Activated naive CD4-positive, alpha-beta T cell treated with anti-CD3 and anti-CD28 coated beads for 36 hours (primary cell): ENCODE measurements at regions of chr3 and their contacts with region 1.

Region 1: DNA sequence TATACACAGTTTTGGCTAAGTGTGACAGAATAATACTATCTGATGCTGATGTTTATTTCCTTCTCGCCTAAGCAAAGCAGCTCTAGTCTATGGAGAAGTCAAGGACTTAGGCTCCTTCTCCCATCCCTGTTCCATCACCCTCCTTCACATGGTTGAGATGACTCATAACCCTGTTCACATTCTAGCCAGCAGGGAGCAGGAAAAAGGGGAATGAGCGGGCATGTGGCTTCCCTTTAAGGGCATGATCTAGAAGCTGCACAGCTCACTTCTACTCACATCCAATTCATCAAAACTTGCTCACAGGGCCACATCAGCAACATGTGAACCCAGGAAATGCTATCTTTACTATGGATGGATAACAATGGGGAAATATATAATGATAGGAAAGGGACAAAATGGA is 40.9 kb downstream of the CBLB start:
- DNase-seq: peak; percentile 26
- H3K4me3 Mint-ChIP-seq: peak overlapping the region; percentile 41
- H3K27ac Mint-ChIP-seq: peak overlapping the region; percentile 99
- H3K4me1 Mint-ChIP-seq: peaks cover 84% of the 10 kb centered on the region
- H3K27me3 Mint-ChIP-seq: no peaks in the 10 kb centered on the region

Region 2: GRCh38 chr3:105747060-105747541 is 80.9 kb before region 1 on chr3:
- CTCF ChIA-PET with region 1: no interaction called
- intact Hi-C with region 1: loop called (anchors 1 kb)
- DNase-seq: no peak
- H3K4me3 Mint-ChIP-seq: no peak overlapping the region
- H3K27ac Mint-ChIP-seq: peak overlapping the region; percentile 79
- H3K4me1 Mint-ChIP-seq: peaks cover 76% of the 10 kb centered on the region
- H3K27me3 Mint-ChIP-seq: no peaks in the 10 kb centered on the region

Region 3: GRCh38 chr3:105774444-105775180 is 53.3 kb before region 1 on chr3:
- CTCF ChIA-PET with region 1: interaction called, 4 read pairs
- intact Hi-C with region 1: loop called (anchors 1 kb)
- DNase-seq: no peak
- H3K4me3 Mint-ChIP-seq: no peak overlapping the region
- H3K27ac Mint-ChIP-seq: peak overlapping the region; percentile 26
- H3K4me1 Mint-ChIP-seq: peaks cover 74% of the 10 kb centered on the region
- H3K27me3 Mint-ChIP-seq: no peaks in the 10 kb centered on the region

Region 4: DNA sequence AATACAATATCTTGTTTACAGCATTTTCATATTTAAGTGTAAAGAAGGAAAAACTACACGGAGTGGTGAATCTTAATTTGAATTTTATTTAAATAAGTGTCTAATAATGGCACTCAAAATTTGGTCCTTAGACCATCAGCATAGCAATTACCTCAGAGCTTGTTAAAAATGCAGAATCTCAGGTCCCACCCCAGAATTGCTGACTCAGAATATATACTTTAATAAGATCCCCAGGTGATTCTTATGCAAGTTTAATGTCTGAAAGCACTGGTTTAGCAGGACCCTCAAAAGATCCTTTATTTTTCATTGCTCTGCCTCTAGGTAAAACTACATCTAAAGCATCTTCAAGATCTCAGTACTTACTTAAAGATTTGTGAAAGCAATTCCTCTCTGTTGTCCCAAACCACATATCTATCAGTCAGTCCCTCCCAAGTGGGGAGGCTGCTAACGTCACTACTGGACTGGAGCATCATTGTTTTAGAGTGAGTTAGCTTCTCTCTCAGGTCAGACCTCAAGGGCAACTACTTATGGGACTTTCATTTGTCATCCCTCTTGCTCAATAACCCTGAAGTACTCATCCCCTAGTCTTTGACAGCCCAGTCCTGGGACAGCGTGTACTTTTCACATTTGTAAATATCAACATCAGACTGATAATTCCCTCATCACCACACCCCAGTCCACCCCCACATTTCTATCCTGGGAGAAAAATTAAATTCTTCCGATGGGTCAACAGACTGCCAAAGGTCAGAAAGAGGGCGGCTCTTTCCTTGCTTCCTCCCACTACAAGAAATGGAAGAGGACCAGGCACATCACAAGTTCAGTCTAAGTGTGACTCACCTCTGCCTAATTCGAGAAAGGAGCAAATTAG is 35.8 kb before region 1 on chr3:
- CTCF ChIA-PET with region 1: no interaction called
- intact Hi-C with region 1: no loop called
- DNase-seq: no peak
- H3K4me3 Mint-ChIP-seq: no peak overlapping the region
- H3K27ac Mint-ChIP-seq: no peak overlapping the region
- H3K4me1 Mint-ChIP-seq: peaks cover 65% of the 10 kb centered on the region
- H3K27me3 Mint-ChIP-seq: no peaks in the 10 kb centered on the region

Region 5: GRCh38 chr3:105806361-105806760 is 21.6 kb before region 1 on chr3:
- CTCF ChIA-PET with region 1: interaction called, 3 read pairs
- intact Hi-C with region 1: loop called (anchors 1 kb)
- DNase-seq: no peak
- H3K4me3 Mint-ChIP-seq: no peak overlapping the region
- H3K27ac Mint-ChIP-seq: no peak overlapping the region
- H3K4me1 Mint-ChIP-seq: peaks cover 62% of the 10 kb centered on the region
- H3K27me3 Mint-ChIP-seq: no peaks in the 10 kb centered on the region

Region 6: DNA sequence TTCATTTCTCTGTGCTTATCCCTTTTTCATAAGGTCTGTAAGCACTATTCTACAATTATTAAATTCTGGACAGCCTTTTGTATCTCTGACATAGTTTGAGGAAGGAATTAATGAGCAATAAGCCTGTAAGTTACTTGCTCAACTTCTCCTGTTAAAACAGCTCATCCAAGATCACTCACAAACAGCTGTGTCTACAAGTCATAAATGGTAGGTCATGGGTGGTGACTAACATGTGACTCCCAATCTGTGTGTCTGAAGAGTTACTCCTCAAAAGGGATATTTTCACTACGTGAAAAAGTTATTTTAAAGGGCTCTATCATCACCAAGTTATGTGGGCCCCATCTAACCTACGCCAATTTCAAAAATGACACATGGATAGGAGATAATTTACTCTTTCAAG is 186.0 kb after region 1 on chr3:
- CTCF ChIA-PET with region 1: no interaction called
- intact Hi-C with region 1: loop called (anchors 2 kb)
- DNase-seq: no peak
- H3K4me3 Mint-ChIP-seq: no peak overlapping the region
- H3K27ac Mint-ChIP-seq: peak overlapping the region; percentile 37
- H3K4me1 Mint-ChIP-seq: peaks cover 49% of the 10 kb centered on the region
- H3K27me3 Mint-ChIP-seq: no peaks in the 10 kb centered on the region

Region 7: GRCh38 chr3:106299300-106300098 is 471.5 kb after region 1 on chr3:
- CTCF ChIA-PET with region 1: no interaction called
- intact Hi-C with region 1: loop called (anchors 1 kb)
- DNase-seq: peak; percentile 46
- H3K4me3 Mint-ChIP-seq: no peak overlapping the region
- H3K27ac Mint-ChIP-seq: peak overlapping the region; percentile 40
- H3K4me1 Mint-ChIP-seq: peaks cover 54% of the 10 kb centered on the region
- H3K27me3 Mint-ChIP-seq: no peaks in the 10 kb centered on the region